ENCODE measurements at regions of chr18 and their contacts with region 1.

Region 1: GRCh38 chr18:37484983-37485834 is 80.4 kb downstream of the CELF4 start:
- DNase-seq: peak; percentile 43 to 77
- H3K4me3 ChIP-seq: peak overlapping the region; percentile 7 to 60 (median 36); a peak in 7 of 8 replicates
- H3K27ac ChIP-seq: no peak overlapping the region
- H3K4me1 ChIP-seq: peaks cover 3 to 33% (median 21%) of the 10 kb centered on the region in 4 experiments
- H3K27me3 ChIP-seq: peaks cover 0 to 34% (median 24%) of the 10 kb centered on the region in 4 experiments; a peak in 6 of 7 replicates
- CTCF ChIP-seq: peak; percentile 57 to 79 (median 66)
- EP300 ChIP-seq: no peak
- POLR2A ChIP-seq: no peak
- RAD21 ChIP-seq: peak in 1 of 2 experiments; percentile 43; a peak in 2 of 4 replicates

Region 2: GRCh38 chr18:37327063-37327577 is 158.1 kb before region 1 on chr18:
- CTCF ChIA-PET with region 1: no interaction called
- POLR2A ChIA-PET with region 1: no interaction called
- DNase-seq: no peak
- H3K4me3 ChIP-seq: no peak overlapping the region
- H3K27ac ChIP-seq: no peak overlapping the region
- H3K4me1 ChIP-seq: peaks cover 0 to 2% (median 1%) of the 10 kb centered on the region in 4 experiments; a peak in 2 of 7 replicates
- H3K27me3 ChIP-seq: no peaks in the 10 kb centered on the region
- CTCF ChIP-seq: no peak
- EP300 ChIP-seq: no peak
- POLR2A ChIP-seq: no peak
- RAD21 ChIP-seq: no peak

Region 3: GRCh38 chr18:37460604-37461003 is 24.6 kb before region 1 on chr18:
- CTCF ChIA-PET with region 1: interaction called, 11 read pairs
- POLR2A ChIA-PET with region 1: interaction called, 4 read pairs
- DNase-seq: no peak
- H3K4me3 ChIP-seq: no peak overlapping the region
- H3K27ac ChIP-seq: no peak overlapping the region
- H3K4me1 ChIP-seq: no peaks in the 10 kb centered on the region; a peak in 1 of 7 replicates
- H3K27me3 ChIP-seq: no peaks in the 10 kb centered on the region; a peak in 2 of 7 replicates
- CTCF ChIP-seq: no peak
- EP300 ChIP-seq: no peak
- POLR2A ChIP-seq: no peak
- RAD21 ChIP-seq: no peak

Region 4: DNA sequence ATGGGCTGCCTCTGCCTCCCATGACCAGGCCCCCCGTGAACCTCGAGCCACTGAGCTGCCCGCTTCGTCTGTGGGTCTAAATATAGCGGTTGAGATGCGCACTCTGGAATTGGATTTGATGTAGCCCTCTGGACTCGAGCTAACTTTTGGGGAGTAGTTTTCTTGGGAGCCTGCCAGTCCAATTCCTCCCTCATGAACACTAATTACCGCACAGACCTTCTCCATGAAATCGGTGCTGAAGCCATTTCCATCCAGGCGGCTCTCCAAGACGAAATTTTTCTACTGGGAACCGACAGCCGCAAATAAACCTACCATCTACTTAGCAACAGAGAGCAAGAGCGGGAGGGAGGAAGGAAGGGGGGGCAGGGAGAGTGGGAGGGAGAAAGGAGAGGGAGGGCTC is 16.8 kb after region 1 on chr18:
- CTCF ChIA-PET with region 1: interaction called, 46 read pairs
- POLR2A ChIA-PET with region 1: interaction called, 6 read pairs
- DNase-seq: no peak
- H3K4me3 ChIP-seq: no peak overlapping the region
- H3K27ac ChIP-seq: no peak overlapping the region
- H3K4me1 ChIP-seq: peaks cover 0 to 10% (median 3%) of the 10 kb centered on the region in 4 experiments; a peak in 3 of 7 replicates
- H3K27me3 ChIP-seq: no peaks in the 10 kb centered on the region
- CTCF ChIP-seq: no peak
- EP300 ChIP-seq: no peak
- POLR2A ChIP-seq: no peak
- RAD21 ChIP-seq: no peak

Measured in H1 (cell line).